IMR-90 (cell line): ENCODE measurements at regions of chr2 and their contacts with region 1.

Region 1: DNA sequence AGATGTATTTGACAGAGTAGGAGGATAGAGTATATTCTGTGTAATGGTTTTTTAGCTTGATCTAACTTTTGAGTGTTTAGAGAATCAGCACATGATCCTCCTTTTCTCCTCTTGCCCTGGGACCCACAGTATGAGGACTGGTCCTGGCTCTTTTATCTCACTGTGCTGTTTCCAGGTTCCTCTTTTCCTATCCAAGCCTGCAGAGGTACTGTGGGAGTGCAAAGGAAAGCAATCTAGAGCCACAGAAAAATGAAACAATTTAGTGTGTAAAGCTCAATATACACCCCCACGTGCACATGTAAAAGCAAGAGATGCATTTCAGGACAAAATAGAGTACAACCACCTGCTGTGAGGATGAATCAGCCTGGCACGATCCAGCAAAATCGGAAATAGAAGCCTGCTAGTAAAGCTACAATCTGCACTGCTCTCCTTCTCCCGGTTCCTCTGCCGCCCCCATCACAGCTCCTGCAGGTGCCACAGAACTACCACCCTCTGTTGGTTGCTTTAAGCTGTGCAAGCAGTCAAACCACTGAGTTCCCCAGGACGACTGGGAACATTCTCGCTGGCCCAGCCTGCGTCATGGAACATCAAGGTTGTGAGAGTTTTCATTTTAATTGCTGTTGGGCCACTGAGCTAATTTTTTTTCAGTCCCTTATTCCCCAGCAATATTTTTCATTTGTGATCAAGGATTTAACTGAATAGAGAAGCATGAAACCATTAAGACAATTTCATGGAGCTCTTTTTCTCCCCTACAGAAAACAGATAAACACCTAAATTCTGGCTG is 47.8 kb upstream of the MAPRE3 start:
- DNase-seq: peak; percentile 6
- ATAC-seq: no peak; the same call in 1 of the 2 replicates
- H3K4me3 ChIP-seq: no peak overlapping the region
- H3K27ac ChIP-seq: no peak overlapping the region
- H3K4me1 ChIP-seq: peaks cover 5% of the 10 kb centered on the region; the same call in 1 of the 2 replicates
- H3K27me3 ChIP-seq: peaks cover 34% of the 10 kb centered on the region
- CTCF ChIP-seq: peak; percentile 30; the same call in 1 of the 2 replicates
- POLR2A ChIP-seq: no peak
- RAD21 ChIP-seq: no peak; the same call in 1 of the 2 replicates

Region 2: GRCh38 chr2:26805241-26805676 is 117.3 kb before region 1 on chr2:
- CTCF ChIA-PET with region 1: interaction called, 11 read pairs
- POLR2A ChIA-PET with region 1: no interaction called
- dilution Hi-C with region 1: no loop called
- in situ Hi-C with region 1: no loop called
- intact Hi-C with region 1: no loop called
- DNase-seq: peak; percentile 87
- ATAC-seq: peak; percentile 61
- H3K4me3 ChIP-seq: no peak overlapping the region
- H3K27ac ChIP-seq: no peak overlapping the region
- H3K4me1 ChIP-seq: no peaks in the 10 kb centered on the region
- H3K27me3 ChIP-seq: peaks cover 6% of the 10 kb centered on the region
- CTCF ChIP-seq: no peak
- POLR2A ChIP-seq: no peak
- RAD21 ChIP-seq: no peak